ENCODE measurements at regions of chr3 and their contacts with region 1.

Region 1: GRCh38 chr3:10010486-10011465 is 15.5 kb upstream of the FANCD2 start:
- DNase-seq: peak; percentile 90 to 98
- H3K4me3 ChIP-seq: peak overlapping the region; percentile 60 to 81
- H3K27ac ChIP-seq: peak overlapping the region; percentile 52 to 78
- H3K4me1 ChIP-seq: peaks cover 9 to 33% of the 10 kb centered on the region in 2 donors
- H3K27me3 ChIP-seq: no peaks in the 10 kb centered on the region
- CTCF ChIP-seq: peak in 1 of 3 experiments; percentile 4

Region 2: GRCh38 chr3:9396700-9397521 is 613.9 kb before region 1 on chr3:
- intact Hi-C with region 1: loop called (anchors 5 kb)
- DNase-seq: peak; percentile 97 to 99
- H3K4me3 ChIP-seq: peak overlapping the region; percentile 81 to 89
- H3K27ac ChIP-seq: peak overlapping the region; percentile 100
- H3K4me1 ChIP-seq: peaks cover 12 to 54% of the 10 kb centered on the region in 2 donors
- H3K27me3 ChIP-seq: no peaks in the 10 kb centered on the region
- CTCF ChIP-seq: no peak

Region 3: DNA sequence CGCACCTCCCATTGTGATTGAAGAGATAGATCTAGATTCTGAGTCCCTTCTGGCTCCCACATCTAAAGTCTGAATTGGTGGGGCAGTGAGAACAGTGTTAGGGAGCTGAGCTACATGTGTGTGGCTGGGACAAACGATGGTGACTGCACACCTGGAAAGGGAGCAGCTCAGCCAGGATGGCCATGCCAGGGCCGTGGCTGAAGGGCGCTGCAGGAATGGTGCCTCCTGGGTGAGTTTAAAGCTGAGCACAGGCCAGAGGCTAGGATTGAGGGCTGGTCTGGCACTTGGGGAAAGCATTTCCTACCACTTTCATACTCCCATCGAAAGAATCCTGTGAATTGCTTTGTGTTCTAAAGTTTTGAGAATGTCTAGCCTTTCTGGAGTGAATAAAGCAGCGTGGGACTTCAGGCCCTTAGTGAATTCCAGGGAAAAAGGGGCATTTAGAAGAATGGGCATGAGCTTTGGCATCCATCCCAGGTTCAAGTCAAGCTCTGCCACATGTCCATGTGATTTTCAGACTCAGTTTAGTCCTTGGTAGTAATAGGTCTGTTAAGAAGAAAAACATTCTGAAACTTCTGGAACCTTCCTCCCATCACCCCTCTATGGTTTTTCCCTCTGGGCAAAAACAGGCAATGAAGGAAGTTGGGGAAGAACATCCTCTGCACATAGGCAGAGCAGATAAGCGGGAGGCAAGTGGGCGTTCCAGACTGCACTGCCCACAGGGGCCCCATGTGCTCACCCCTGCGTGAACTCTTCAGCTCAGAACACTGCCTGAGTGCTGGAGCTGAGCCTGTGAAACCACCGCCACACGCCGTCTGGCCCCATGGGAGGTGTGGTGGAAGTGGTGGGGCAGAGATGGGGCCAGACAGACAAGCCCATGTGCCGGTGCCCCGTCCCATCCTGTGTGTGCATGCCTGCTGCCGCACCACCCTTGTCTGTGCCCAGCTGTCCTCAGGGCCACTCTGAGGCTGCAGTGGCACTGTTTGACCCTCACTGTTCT is 320.0 kb before region 1 on chr3:
- intact Hi-C with region 1: no loop called
- DNase-seq: no peak
- H3K4me3 ChIP-seq: no peak overlapping the region
- H3K27ac ChIP-seq: no peak overlapping the region
- H3K4me1 ChIP-seq: no peaks in the 10 kb centered on the region
- H3K27me3 ChIP-seq: no peaks in the 10 kb centered on the region
- CTCF ChIP-seq: no peak

Region 4: GRCh38 chr3:9932843-9933560 is 77.8 kb before region 1 on chr3:
- intact Hi-C with region 1: loop called (anchors 2 kb)
- DNase-seq: peak; percentile 53 to 96
- H3K4me3 ChIP-seq: peak overlapping the region; percentile 82 to 96
- H3K27ac ChIP-seq: peak overlapping the region; percentile 97 to 99
- H3K4me1 ChIP-seq: peaks cover 11 to 21% of the 10 kb centered on the region in 2 donors
- H3K27me3 ChIP-seq: no peaks in the 10 kb centered on the region
- CTCF ChIP-seq: peak; percentile 84 to 93 (median 89)

Region 5: GRCh38 chr3:9976721-9977709 is 33.8 kb before region 1 on chr3:
- intact Hi-C with region 1: loop called (anchors 2 kb)
- DNase-seq: peak; percentile 62 to 92
- H3K4me3 ChIP-seq: no peak overlapping the region
- H3K27ac ChIP-seq: peak overlapping the region; percentile 77 to 89
- H3K4me1 ChIP-seq: peaks cover 6 to 19% of the 10 kb centered on the region in 2 donors
- H3K27me3 ChIP-seq: no peaks in the 10 kb centered on the region
- CTCF ChIP-seq: no peak

Region 6: GRCh38 chr3:10026084-10026890 is 15.5 kb after region 1 on chr3 and contains the start of gene FANCD2:
- intact Hi-C with region 1: loop called (anchors 2 kb)
- DNase-seq: peak; percentile 56 to 93
- H3K4me3 ChIP-seq: peak within 1 kb of the TSS; percentile 72 to 83
- H3K27ac ChIP-seq: peak within 1 kb of the TSS; percentile 59 to 62
- H3K4me1 ChIP-seq: peaks cover 7 to 22% of the 10 kb centered on the region in 2 donors
- H3K27me3 ChIP-seq: no peaks in the 10 kb centered on the region
- CTCF ChIP-seq: no peak
- total RNA-seq, gene FANCD2: 54.6 TPM

Region 7: GRCh38 chr3:10228248-10228950 is 217.6 kb after region 1 on chr3:
- intact Hi-C with region 1: no loop called
- DNase-seq: no peak
- H3K4me3 ChIP-seq: no peak overlapping the region
- H3K27ac ChIP-seq: no peak overlapping the region
- H3K4me1 ChIP-seq: no peaks in the 10 kb centered on the region
- H3K27me3 ChIP-seq: no peaks in the 10 kb centered on the region
- CTCF ChIP-seq: no peak